Endothelial cell of umbilical vein (primary cell): ENCODE measurements at regions of chr10 and their contacts with region 1.

Region 1: GRCh38 chr10:29131952-29132820 is 156.7 kb upstream of the LYZL1 start:
- DNase-seq: peak; percentile 95
- H3K4me3 ChIP-seq: no peak overlapping the region
- H3K27ac ChIP-seq: peak overlapping the region; percentile 41
- H3K4me1 ChIP-seq: peaks cover 16% of the 10 kb centered on the region
- H3K27me3 ChIP-seq: peaks cover 6% of the 10 kb centered on the region in 2 experiments
- CTCF ChIP-seq: no peak
- POLR2A ChIP-seq: peak; percentile 54

Region 2: DNA sequence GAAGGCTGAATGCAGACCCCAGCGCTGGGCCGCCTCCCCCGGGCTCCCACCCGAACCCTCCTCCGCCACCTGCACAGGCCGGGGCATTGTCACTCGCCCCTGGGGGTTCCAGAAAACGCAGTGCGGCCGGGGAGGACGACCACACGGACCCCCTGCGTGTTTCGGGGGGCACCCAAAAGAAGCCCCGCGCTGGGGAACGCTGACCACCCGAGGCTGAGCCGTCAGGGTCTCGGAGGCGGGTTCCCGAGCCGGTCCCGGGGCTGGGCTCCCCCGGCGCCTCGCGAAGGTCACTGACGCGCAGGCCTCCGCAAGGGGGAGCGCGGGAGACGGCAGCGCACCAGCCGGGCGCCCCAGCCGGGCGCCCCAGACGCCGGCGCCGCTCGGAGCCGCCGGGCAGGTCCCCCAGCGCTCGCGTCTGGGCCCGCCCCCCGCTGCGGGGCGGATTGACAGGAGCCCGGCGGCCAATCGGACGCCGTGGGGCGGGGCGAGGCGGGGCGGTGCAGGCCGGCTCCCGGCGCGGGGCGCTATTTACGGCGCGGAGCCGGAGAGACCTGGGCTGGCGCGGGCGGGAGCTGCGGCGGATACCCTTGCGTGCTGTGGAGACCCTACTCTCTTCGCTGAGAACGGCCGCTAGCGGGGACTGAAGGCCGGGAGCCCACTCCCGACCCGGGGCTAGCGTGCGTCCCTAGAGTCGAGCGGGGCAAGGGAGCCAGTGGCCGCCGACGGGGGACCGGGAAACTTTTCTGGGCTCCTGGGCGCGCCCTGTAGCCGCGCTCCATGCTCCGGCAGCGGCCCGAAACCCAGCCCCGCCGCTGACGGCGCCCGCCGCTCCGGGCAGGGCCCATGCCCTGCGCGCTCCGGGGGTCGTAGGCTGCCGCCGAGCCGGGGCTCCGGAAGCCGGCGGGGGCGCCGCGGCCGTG is 455.0 kb before region 1 on chr10 and contains the start of gene BAMBI:
- CTCF ChIA-PET with region 1: interaction called, 3 read pairs
- POLR2A ChIA-PET with region 1: no interaction called
- dilution Hi-C with region 1: no loop called
- intact Hi-C with region 1: loop called (anchors 5 kb)
- DNase-seq: peak; percentile 92
- H3K4me3 ChIP-seq: peak within 1 kb of the TSS; percentile 30 to 78 (median 64)
- H3K27ac ChIP-seq: peak within 1 kb of the TSS; percentile 28
- H3K4me1 ChIP-seq: peaks cover 32% of the 10 kb centered on the region
- H3K27me3 ChIP-seq: peaks cover 18 to 36% of the 10 kb centered on the region in 2 experiments
- CTCF ChIP-seq: peak; percentile 62 to 69
- POLR2A ChIP-seq: peak; percentile 96
- total RNA-seq, gene BAMBI: 3.2 and 4.3 TPM in 2 replicates

Region 3: GRCh38 chr10:29119374-29119773 is 12.8 kb before region 1 on chr10:
- CTCF ChIA-PET with region 1: interaction called, 19 read pairs
- POLR2A ChIA-PET with region 1: interaction called, 4 read pairs
- dilution Hi-C with region 1: no loop called
- intact Hi-C with region 1: no loop called
- DNase-seq: peak; percentile 42
- H3K4me3 ChIP-seq: no peak overlapping the region
- H3K27ac ChIP-seq: no peak overlapping the region
- H3K4me1 ChIP-seq: no peaks in the 10 kb centered on the region
- H3K27me3 ChIP-seq: peaks cover 0 to 5% of the 10 kb centered on the region in 2 experiments
- CTCF ChIP-seq: peak; percentile 62 to 66
- POLR2A ChIP-seq: no peak

Region 4: DNA sequence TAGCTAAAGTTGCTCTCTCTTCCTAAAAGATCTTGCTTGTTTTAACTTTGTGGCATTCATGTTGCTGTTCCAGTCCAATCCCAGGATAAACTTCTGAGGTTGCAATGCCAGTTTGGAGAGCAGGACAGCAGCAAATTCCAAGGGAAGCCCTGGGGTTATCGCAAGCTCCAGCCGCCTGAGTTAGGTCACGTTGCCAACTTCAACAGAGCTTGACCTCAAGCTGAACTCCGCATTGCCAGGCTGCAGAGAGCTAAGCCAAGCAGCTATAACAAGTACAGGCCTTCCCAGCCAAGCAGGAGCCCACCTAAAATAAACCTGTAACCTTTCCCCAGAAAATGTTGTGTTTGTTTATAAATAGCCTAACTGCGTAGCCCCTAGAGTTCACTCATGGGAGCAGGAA is 17.8 kb after region 1 on chr10:
- CTCF ChIA-PET with region 1: interaction called, 10 read pairs
- POLR2A ChIA-PET with region 1: interaction called, 3 read pairs
- dilution Hi-C with region 1: no loop called
- intact Hi-C with region 1: no loop called
- DNase-seq: peak; percentile 95
- H3K4me3 ChIP-seq: no peak overlapping the region
- H3K27ac ChIP-seq: peak overlapping the region; percentile 51
- H3K4me1 ChIP-seq: peaks cover 15% of the 10 kb centered on the region
- H3K27me3 ChIP-seq: no peaks in the 10 kb centered on the region
- CTCF ChIP-seq: no peak
- POLR2A ChIP-seq: peak; percentile 58

Region 5: GRCh38 chr10:29160110-29160669 is 28.0 kb after region 1 on chr10:
- CTCF ChIA-PET with region 1: interaction called, 6 read pairs
- POLR2A ChIA-PET with region 1: no interaction called
- dilution Hi-C with region 1: no loop called
- intact Hi-C with region 1: loop called (anchors 1 kb)
- DNase-seq: peak; percentile 78
- H3K4me3 ChIP-seq: no peak overlapping the region
- H3K27ac ChIP-seq: peak overlapping the region; percentile 45
- H3K4me1 ChIP-seq: peaks cover 11% of the 10 kb centered on the region
- H3K27me3 ChIP-seq: no peaks in the 10 kb centered on the region
- CTCF ChIP-seq: no peak
- POLR2A ChIP-seq: no peak

Region 6: DNA sequence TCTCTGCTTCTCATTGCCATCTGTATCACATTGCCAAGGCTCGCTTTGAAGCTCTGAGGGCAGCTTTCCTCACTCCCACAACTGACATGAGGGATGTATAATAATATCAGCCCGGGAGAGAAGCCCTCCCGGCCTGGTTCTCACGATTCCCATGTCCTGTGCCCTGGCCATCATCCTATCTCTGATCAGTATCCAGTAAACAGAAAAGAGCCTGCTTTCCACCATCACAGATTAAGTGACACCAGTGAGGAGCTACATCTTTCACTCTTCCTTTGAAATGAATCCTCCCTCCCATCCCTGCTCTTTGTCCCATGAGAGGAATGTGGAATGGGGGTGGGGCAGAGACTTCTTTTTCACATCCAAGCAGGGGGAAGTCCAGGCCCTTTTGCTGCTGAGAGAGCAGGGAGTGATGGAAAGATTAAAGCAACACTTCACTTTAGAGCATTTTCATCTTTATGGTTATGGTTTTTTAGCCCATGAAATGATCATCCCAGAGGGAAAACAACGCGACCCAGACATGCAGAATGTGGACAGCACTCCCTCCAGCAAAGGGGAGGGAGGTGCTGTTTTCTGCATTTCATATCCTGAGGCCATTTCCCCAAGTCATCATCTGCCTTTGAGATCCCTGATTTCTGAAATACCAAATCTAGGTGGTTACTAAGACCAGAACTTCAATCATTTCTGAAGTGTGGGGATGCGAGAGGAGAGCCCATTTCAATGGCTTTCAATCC is 72.0 kb after region 1 on chr10:
- CTCF ChIA-PET with region 1: no interaction called
- POLR2A ChIA-PET with region 1: no interaction called
- dilution Hi-C with region 1: no loop called
- intact Hi-C with region 1: no loop called
- DNase-seq: no peak
- H3K4me3 ChIP-seq: no peak overlapping the region
- H3K27ac ChIP-seq: no peak overlapping the region
- H3K4me1 ChIP-seq: no peaks in the 10 kb centered on the region
- H3K27me3 ChIP-seq: peaks cover 2 to 9% of the 10 kb centered on the region in 2 experiments
- CTCF ChIP-seq: no peak
- POLR2A ChIP-seq: no peak

Region 7: DNA sequence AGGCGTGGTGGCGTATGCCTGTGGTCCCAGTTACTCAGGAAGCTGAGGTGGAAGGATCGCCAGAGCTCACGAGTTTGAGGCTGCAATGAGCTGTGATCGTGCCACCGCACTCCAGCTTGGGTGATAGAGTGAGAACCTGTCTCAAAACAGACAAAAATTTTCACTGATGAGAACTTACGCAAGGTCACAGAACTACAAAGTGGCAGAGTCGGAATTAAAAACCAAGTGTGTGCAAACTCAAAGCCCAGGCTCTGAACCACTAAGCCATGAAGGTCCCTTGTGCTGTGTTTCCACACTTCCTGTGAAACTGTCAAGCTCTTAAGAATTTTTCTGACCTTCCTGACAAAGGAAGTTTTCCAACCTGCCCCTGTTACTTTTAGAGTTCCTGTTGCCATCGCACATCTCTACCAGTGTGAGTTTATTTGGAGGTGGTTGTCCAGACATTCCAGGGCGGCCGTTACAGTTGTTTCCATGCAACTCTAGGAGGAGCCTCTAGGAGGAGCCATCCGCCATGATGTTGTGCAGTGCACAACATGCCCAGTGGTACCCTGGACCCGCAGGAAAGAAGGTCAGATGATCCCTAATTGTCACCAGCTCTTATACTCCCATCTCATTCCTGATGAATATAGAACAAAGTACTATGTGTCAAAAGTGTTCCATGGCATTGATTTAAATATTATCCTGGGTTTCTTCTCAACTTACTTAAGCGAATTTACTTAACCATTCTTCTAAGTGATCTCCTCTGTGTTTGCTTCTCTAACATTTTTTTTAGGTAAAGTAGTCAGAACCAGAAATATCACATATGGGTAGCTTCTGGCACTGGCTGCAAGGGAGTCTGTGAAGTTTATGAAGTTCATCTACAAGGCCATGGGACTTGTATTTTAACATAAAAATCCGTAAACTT is 107.6 kb after region 1 on chr10:
- CTCF ChIA-PET with region 1: interaction called, 5 read pairs
- POLR2A ChIA-PET with region 1: no interaction called
- dilution Hi-C with region 1: no loop called
- intact Hi-C with region 1: loop called (anchors 10 kb)
- DNase-seq: peak; percentile 4
- H3K4me3 ChIP-seq: no peak overlapping the region
- H3K27ac ChIP-seq: no peak overlapping the region
- H3K4me1 ChIP-seq: no peaks in the 10 kb centered on the region
- H3K27me3 ChIP-seq: peaks cover 0 to 2% of the 10 kb centered on the region in 2 experiments
- CTCF ChIP-seq: peak; percentile 39 to 52
- POLR2A ChIP-seq: no peak